Endothelial cell of umbilical vein (primary cell): ENCODE measurements at regions of chr7 and their contacts with region 1.

Region 1: DNA sequence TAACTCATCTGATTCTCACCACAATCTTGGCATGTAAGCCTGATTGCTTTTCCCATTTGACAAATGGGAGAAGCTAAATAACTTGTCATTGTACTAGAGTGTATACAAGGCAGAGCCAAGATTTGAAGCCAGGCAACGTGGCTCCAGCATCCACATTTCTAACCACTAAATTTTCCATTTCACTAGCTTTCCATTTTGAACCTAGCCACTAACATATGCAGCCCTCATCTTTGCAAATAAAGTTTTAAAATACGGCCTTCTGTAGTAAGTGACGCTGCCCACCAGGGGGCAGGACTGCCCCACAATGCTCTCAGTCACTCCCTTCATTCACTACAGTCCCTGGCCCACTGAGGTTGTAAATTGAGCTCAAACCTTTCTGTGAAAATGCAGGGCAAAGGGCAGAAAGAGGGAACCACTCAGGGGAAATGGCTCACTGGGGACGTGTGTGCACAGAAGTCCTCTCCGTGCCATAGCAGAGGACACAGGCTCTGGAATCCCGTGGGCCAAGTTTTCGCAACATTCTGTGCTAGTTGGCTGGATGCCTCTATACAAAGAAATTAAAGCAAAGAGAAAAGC is 315.7 kb downstream of the TNS3 start:
- DNase-seq: peak; percentile 69
- H3K4me3 ChIP-seq: no peak overlapping the region
- H3K27ac ChIP-seq: no peak overlapping the region
- H3K4me1 ChIP-seq: no peaks in the 10 kb centered on the region
- H3K27me3 ChIP-seq: no peaks in the 10 kb centered on the region
- CTCF ChIP-seq: peak; percentile 87 to 88
- POLR2A ChIP-seq: no peak

Region 2: GRCh38 chr7:47170516-47170915 is 95.7 kb before region 1 on chr7:
- CTCF ChIA-PET with region 1: no interaction called
- POLR2A ChIA-PET with region 1: no interaction called
- dilution Hi-C with region 1: no loop called
- intact Hi-C with region 1: no loop called
- DNase-seq: no peak
- H3K4me3 ChIP-seq: no peak overlapping the region
- H3K27ac ChIP-seq: no peak overlapping the region
- H3K4me1 ChIP-seq: no peaks in the 10 kb centered on the region
- H3K27me3 ChIP-seq: peaks cover 0 to 2% of the 10 kb centered on the region in 2 experiments
- CTCF ChIP-seq: no peak
- POLR2A ChIP-seq: no peak

Region 3: DNA sequence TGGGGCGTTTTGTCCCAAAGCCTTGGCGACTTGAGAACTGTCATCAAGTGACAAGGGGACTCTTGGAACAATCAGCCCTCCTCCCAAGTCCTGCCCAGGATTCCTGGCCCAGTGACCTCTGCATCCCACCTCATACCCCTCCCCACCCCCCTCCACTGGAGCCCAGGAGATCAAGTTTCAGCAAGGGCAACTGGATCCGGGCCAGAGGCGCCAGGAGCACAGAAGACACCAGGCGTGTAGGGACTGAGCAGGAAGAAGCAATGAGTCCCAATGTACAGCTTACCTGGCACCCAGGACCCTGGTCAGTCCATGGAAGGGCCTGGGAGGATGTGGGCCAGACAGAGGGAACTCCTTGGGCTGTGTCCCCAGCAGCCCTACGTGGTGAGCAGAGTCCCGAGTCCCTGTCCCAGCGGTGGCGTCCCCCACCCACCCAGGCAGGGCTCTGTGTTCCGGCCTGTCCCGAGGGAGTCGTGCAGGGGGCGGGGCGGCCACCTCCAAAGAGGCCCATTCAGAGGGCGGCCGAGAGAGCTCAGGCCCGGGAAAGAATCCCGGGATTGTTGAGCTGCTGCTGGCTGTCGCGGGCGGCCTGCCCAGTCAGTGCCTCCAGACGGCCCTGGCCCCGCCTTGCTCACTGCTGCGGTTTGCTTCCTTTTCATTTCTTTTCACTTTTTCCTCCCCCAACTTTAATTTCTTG is 61.6 kb after region 1 on chr7:
- CTCF ChIA-PET with region 1: interaction called, 29 read pairs
- POLR2A ChIA-PET with region 1: no interaction called
- dilution Hi-C with region 1: no loop called
- intact Hi-C with region 1: loop called (anchors 5 kb)
- DNase-seq: peak; percentile 48
- H3K4me3 ChIP-seq: peak overlapping the region in 1 of 3 experiments; percentile 13
- H3K27ac ChIP-seq: peak overlapping the region; percentile 38
- H3K4me1 ChIP-seq: peaks cover 32% of the 10 kb centered on the region
- H3K27me3 ChIP-seq: no peaks in the 10 kb centered on the region
- CTCF ChIP-seq: no peak
- POLR2A ChIP-seq: no peak

Region 4: GRCh38 chr7:47422611-47423010 is 156.4 kb after region 1 on chr7:
- CTCF ChIA-PET with region 1: interaction called, 27 read pairs
- POLR2A ChIA-PET with region 1: no interaction called
- dilution Hi-C with region 1: no loop called
- intact Hi-C with region 1: no loop called
- DNase-seq: no peak
- H3K4me3 ChIP-seq: no peak overlapping the region
- H3K27ac ChIP-seq: no peak overlapping the region
- H3K4me1 ChIP-seq: peaks cover 6% of the 10 kb centered on the region
- H3K27me3 ChIP-seq: no peaks in the 10 kb centered on the region
- CTCF ChIP-seq: no peak
- POLR2A ChIP-seq: no peak

Region 5: GRCh38 chr7:47453093-47454049 is 187.2 kb after region 1 on chr7:
- CTCF ChIA-PET with region 1: interaction called, 13 read pairs
- POLR2A ChIA-PET with region 1: no interaction called
- dilution Hi-C with region 1: no loop called
- intact Hi-C with region 1: no loop called
- DNase-seq: peak; percentile 74
- H3K4me3 ChIP-seq: peak overlapping the region in 2 of 3 experiments; percentile 38 to 72
- H3K27ac ChIP-seq: peak overlapping the region; percentile 99
- H3K4me1 ChIP-seq: peaks cover 46% of the 10 kb centered on the region
- H3K27me3 ChIP-seq: no peaks in the 10 kb centered on the region
- CTCF ChIP-seq: no peak
- POLR2A ChIP-seq: no peak

Region 6: GRCh38 chr7:47792521-47793121 is 526.4 kb after region 1 on chr7:
- CTCF ChIA-PET with region 1: interaction called, 17 read pairs
- POLR2A ChIA-PET with region 1: no interaction called
- dilution Hi-C with region 1: no loop called
- intact Hi-C with region 1: loop called (anchors 1 kb)
- DNase-seq: peak; percentile 69
- H3K4me3 ChIP-seq: no peak overlapping the region
- H3K27ac ChIP-seq: no peak overlapping the region
- H3K4me1 ChIP-seq: peaks cover 2% of the 10 kb centered on the region
- H3K27me3 ChIP-seq: no peaks in the 10 kb centered on the region
- CTCF ChIP-seq: peak; percentile 52 to 57
- POLR2A ChIP-seq: no peak

Region 7: DNA sequence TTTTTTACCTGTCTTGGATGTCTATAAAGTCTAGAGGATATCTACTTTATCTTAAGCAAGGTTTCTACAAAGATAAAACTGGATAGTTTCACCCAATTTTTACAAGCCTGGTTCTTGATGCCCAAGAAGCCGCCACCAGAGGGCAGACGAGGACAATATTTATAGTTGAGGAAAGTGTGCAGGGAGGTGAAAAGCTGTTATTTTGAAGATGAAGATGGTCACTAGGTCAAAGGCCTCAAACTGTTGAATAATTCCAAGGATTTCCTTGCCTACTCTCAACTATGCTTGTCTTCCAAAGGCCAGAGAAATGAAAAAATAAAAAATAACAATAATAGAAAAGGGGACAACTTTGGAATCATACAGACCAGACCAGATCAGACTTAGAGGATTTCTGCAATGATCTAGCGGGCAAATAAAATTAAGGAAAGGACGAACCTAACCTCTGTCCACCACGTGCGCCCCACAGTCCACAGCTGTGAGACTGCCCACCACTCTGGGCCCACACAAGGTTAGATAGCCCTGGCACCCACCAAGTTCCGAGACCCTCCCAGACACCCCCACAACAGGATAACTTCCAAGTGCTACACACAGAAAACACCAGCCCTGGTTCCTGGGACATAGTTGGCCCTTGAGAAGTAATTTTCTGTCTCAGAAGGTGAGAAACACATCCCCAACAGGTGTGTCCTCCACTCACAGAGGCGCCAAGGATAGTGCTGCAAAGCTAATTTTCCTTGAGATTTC is 679.2 kb after region 1 on chr7:
- CTCF ChIA-PET with region 1: interaction called, 51 read pairs
- POLR2A ChIA-PET with region 1: no interaction called
- dilution Hi-C with region 1: no loop called
- intact Hi-C with region 1: loop called (anchors 5 kb)
- DNase-seq: peak; percentile 83
- H3K4me3 ChIP-seq: no peak overlapping the region
- H3K27ac ChIP-seq: peak overlapping the region; percentile 60
- H3K4me1 ChIP-seq: peaks cover 86% of the 10 kb centered on the region
- H3K27me3 ChIP-seq: no peaks in the 10 kb centered on the region
- CTCF ChIP-seq: peak; percentile 61 to 65
- POLR2A ChIP-seq: no peak